ENCODE measurements at regions of chr5 and their contacts with region 1.

Region 1: DNA sequence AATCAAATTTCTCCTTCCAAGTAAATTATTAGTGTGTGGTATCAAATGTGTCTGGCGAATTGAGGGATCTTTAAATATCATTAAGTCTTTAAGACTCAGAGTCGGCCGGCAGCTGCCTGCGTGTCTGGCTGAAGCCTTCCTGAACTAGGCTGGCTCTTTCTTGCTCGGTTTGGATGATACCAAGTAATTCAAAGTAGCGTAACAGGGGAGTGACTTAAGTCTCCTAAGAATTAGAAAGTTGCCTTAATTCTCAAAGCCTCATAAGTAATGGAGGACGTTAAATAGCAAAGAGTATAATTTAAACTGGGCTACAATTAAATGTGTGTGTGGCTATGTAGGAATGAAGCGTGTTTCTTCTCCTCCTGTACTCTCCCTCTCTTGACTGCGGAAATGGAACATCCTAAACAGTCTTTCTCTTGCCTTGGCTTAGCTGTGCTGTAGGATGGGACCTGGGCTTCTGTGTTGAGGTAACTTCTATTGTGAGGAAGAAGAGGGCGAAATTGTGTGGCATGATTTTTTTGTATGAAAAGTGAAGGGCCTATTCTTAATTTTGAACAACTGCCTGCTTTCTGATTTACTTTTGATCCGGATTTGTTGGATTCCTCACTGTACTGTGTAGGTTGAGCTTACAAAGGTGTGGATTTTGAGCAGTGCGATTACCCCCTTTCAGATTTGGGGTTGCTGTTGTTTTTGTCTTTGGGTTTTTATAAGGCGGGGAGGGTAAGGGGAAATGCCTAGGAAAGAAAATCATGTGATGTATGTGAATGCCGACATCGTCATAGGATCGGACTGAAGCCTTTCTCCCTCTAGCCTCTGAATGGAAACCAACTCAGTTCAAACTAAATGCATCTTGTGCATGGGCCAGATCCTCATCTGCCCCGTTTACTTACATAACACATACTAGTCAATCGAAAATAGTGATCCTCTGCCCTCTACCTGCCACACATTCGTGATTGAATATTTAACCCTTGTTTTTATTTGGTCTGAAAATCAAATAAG is 29.9 kb downstream of the CPEB4 start:
- DNase-seq: peak; percentile 44
- H3K4me3 Mint-ChIP-seq: no peak overlapping the region
- H3K27ac Mint-ChIP-seq: no peak overlapping the region
- H3K4me1 Mint-ChIP-seq: no peaks in the 10 kb centered on the region
- H3K27me3 Mint-ChIP-seq: no peaks in the 10 kb centered on the region

Region 2: DNA sequence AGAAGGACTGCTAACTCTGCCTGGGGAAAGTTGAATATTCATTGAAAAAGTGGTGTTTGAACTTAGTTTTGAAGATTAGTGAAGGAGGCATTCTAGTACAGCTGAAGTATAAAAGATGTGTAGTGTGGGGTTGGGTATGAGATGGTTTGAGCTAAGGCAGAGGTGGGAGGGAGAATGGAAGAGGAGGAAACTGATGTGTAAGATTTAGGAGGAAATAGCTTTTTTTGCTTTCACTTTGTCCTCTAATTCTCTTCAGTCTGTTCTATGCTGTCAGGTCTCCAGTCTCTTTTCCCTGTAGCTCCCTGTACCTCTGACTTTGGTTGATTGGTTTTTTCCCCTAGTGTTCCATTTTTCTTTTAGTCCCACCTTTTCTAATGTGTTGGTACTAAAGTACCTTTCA is 852.9 kb before region 1 on chr5:
- intact Hi-C with region 1: loop called (anchors 10 kb)
- DNase-seq: no peak
- H3K4me3 Mint-ChIP-seq: peak overlapping the region; percentile 29
- H3K27ac Mint-ChIP-seq: peak overlapping the region; percentile 56
- H3K4me1 Mint-ChIP-seq: peaks cover 16% of the 10 kb centered on the region
- H3K27me3 Mint-ChIP-seq: no peaks in the 10 kb centered on the region

Region 3: DNA sequence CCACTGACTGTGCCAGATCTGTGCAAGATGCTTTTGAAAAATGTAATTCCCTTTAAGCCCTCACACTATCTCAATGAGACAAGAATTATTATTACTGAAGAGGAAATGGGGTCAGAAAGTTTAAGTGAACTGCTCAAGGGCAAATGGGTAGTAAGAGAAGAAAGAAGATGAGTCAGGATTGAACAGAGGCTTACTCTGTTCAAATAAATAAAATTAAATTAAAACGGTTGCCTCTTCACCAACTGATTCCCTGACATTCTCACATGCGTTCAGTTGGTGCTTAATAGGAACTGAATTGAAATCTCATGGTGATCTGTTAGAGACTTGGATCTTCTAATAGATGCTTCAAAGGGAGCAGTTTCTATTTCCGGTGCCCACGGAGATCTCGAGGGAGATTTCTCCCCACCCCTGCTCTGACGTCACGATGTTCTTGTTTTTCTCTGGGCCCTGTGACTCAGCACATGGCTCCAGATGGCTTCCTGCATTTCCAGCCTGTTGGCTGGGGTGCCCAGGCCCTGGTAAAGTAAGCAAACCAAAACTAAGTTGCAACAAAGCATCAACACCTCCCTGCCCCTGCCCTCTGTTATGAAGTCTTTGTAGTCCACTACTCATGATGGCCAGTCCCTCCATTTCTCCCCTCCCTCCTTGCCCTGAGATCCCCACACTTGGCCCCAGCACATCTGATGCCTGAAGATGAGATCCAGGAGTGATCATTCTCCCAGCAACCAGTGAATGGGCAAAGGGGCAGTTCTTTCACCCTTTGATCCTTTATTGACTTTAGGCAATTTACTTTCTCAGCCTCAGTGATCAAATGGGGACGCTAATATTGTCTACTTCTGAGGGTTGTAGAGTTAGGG is 136.0 kb before region 1 on chr5:
- intact Hi-C with region 1: loop called (anchors 1 kb)
- DNase-seq: peak; percentile 40
- H3K4me3 Mint-ChIP-seq: no peak overlapping the region
- H3K27ac Mint-ChIP-seq: peak overlapping the region; percentile 74
- H3K4me1 Mint-ChIP-seq: peaks cover 26% of the 10 kb centered on the region
- H3K27me3 Mint-ChIP-seq: no peaks in the 10 kb centered on the region

Region 4: GRCh38 chr5:173972925-173973615 is 55.0 kb after region 1 on chr5:
- intact Hi-C with region 1: loop called (anchors 1 kb)
- DNase-seq: peak; percentile 53
- H3K4me3 Mint-ChIP-seq: peak overlapping the region; percentile 81
- H3K27ac Mint-ChIP-seq: peak overlapping the region; percentile 18
- H3K4me1 Mint-ChIP-seq: peaks cover 12% of the 10 kb centered on the region
- H3K27me3 Mint-ChIP-seq: peaks cover 32% of the 10 kb centered on the region

Region 5: DNA sequence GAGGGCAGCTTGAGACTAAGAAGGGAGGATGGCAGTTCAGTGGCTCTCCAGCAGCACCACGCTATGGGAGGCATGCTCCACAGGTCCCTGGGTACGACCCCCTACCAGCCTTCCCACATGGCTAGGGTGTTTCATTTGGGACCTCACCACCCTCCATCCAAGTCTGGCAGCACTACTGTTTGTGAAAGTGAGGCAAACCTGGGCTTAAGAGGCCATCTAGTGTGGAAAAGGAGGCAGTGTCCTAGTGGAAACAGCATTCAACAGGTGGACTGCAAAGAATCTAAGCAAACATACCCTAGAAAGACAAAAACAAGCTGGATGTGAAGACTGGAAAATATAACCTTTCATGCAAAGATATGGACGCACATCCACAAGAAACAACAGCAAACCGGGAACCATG is 66.1 kb after region 1 on chr5:
- intact Hi-C with region 1: no loop called
- DNase-seq: no peak
- H3K4me3 Mint-ChIP-seq: no peak overlapping the region
- H3K27ac Mint-ChIP-seq: no peak overlapping the region
- H3K4me1 Mint-ChIP-seq: no peaks in the 10 kb centered on the region
- H3K27me3 Mint-ChIP-seq: peaks cover 8% of the 10 kb centered on the region

Region 6: GRCh38 chr5:174065528-174066197 is 147.6 kb after region 1 on chr5:
- intact Hi-C with region 1: no loop called
- DNase-seq: no peak
- H3K4me3 Mint-ChIP-seq: no peak overlapping the region
- H3K27ac Mint-ChIP-seq: no peak overlapping the region
- H3K4me1 Mint-ChIP-seq: no peaks in the 10 kb centered on the region
- H3K27me3 Mint-ChIP-seq: peaks cover 1% of the 10 kb centered on the region

Region 7: GRCh38 chr5:174424219-174425053 is 506.3 kb after region 1 on chr5:
- intact Hi-C with region 1: no loop called
- DNase-seq: no peak
- H3K4me3 Mint-ChIP-seq: no peak overlapping the region
- H3K27ac Mint-ChIP-seq: no peak overlapping the region
- H3K4me1 Mint-ChIP-seq: peaks cover 1% of the 10 kb centered on the region
- H3K27me3 Mint-ChIP-seq: no peaks in the 10 kb centered on the region

Measured in activated T-helper 1 cell treated with anti-CD3 and anti-CD28 coated beads, Interleukin-12 subunit alpha, Interleukin-12 subunit beta, Interleukin-2, Interleukin-4 antibody, amounts not matched to agents 30 ng/mL and 10 ng/mL and 1 ng/mL, durations not matched to agents 14 hours and 24 hours and 36 hours (primary cell).